AG04449 (cell line): ENCODE measurements at regions of chr15 and their contacts with region 1.

Region 1: DNA sequence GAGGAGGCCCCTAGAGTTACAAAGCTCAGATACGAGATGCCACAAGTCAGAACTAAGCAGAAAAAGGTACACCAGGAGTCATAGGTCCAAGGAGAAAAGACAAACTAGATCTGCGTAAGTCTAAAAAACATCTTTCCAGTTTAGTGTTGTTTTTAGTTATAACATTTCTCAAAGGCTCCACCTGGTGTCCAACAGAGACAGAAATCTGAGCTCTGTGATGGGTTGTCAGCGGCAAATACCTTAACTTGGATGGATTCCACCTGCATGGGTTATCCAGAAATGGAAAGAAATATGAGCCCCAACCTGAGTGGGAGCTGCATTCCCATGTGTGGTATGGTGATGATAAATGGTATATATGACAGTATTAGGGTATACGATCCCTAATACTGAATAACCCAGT is 238.6 kb upstream of the CHRM5 start:
- DNase-seq: no peak
- H3K4me3 ChIP-seq: no peak overlapping the region
- CTCF ChIP-seq: no peak

Region 2: GRCh38 chr15:33234014-33234461 is 495.6 kb before region 1 on chr15:
- CTCF ChIA-PET with region 1: interaction called, 16 read pairs
- POLR2A ChIA-PET with region 1: no interaction called
- DNase-seq: no peak
- H3K4me3 ChIP-seq: no peak overlapping the region
- CTCF ChIP-seq: peak; percentile 44

Region 3: DNA sequence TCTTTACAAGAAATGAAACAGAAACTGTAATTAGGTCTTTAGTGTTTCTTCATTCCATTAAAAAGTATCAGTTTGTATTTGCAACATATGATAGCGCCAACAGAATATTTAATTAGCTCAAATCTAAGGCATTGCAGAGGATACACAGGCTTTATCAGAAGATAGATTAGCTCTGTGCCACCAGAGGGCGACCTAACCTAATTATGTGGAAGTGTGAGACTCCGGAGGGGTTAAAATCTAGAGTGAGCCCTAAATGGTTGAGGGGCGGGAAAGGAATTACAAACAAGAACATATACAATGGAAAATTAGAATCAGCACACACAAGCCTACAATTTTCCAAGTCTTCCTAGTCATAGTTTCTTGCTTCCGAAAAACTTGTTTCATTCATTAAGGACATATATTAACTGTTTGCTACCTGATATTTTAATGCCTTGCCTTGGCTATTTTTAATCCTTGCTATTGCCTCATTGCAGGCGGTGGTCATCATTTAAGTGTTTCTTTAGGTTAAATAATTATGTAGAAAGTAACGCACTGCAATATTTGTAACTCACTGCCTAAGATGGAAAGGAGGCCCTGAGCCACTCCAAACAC is 436.8 kb before region 1 on chr15:
- CTCF ChIA-PET with region 1: interaction called, 34 read pairs
- POLR2A ChIA-PET with region 1: no interaction called
- DNase-seq: no peak
- H3K4me3 ChIP-seq: no peak overlapping the region
- CTCF ChIP-seq: peak; percentile 62

Region 4: DNA sequence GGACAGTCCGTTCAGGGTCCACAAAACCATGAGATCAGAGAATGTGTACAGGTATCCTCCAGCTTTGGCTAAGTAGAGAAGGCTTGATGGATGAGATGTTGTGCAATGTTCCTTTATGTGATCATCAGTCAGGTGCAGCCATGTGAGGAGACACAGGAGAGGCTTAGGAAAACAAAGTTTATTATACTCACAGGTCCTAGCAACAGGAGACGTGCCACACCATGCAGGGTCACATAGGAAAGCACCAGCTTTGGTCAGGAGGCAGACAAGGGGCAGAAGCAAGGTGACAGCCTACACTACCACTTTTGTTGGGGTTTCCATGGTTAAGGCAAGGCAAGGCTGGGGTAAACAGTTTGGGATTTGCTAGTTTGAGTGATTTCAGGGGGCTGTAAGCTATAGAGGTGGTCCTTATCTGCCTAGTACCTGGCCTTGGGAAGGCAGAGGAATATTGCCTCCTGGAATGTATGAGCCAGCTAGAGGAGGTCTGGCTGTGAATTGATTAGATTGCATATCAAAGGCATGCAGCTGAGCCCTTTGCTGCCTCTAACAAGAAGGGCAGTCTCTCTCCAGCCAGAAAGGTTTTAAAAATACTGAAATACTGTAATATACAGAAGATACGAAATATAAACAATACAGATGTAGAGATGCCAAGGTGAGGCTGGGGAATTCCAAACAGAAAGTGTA is 170.3 kb before region 1 on chr15:
- CTCF ChIA-PET with region 1: no interaction called
- POLR2A ChIA-PET with region 1: no interaction called
- DNase-seq: no peak
- H3K4me3 ChIP-seq: no peak overlapping the region
- CTCF ChIP-seq: no peak

Region 5: GRCh38 chr15:33654860-33655259 is 74.8 kb before region 1 on chr15:
- CTCF ChIA-PET with region 1: no interaction called
- POLR2A ChIA-PET with region 1: no interaction called
- DNase-seq: no peak
- H3K4me3 ChIP-seq: no peak overlapping the region
- CTCF ChIP-seq: no peak